SK-N-SH (cell line): ENCODE measurements at regions of chr19 and their contacts with region 1.

Region 1: DNA sequence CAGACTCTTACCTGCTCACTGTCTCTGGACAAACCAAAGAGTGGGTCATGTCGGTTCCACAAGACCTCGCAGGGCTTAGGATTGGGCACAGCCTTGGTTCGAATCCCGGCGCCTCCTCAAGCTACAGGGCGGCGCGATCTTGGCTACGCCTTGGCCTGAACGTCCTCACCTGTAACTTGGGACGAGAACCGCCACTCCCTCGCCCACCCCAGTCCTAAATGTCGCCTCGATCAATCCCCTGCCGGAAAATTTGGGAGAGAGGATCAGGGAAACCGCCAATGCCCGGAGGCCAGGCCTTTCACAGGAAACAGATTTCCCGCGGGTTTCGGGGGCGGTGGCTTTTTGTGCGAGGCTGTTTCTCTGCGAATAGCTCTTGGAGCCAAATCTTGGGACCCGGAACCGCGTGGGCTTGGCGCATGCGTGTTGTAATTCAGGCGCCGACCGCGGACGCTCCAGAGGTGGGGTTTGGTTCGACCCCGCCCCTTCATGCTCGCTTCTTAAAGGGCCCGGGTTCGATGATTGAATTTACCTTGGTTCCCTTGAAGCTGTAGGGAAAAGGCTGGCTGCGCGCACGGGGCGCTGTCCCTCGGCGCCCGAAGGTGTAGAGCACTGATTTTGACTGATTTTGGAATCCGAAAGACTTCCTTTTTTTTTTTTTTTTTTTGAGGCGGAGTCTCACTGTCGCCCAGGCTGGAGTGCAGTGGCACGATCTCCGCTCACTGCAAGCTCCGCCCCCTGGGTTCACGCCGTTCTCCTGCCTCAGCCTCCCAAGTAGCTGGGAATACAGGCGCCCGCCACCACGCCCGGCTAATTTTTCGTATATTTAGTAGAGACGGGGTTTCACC is at the start of gene NR2C2AP:
- DNase-seq: peak; percentile 98
- H3K4me3 ChIP-seq: peak within 1 kb of the TSS; percentile 65 to 79
- H3K27ac ChIP-seq: peak within 1 kb of the TSS; percentile 33 to 51; a peak in 3 of 4 replicates
- H3K4me1 ChIP-seq: peaks cover 0 to 11% of the 10 kb centered on the region in 2 experiments; a peak in 1 of 4 replicates
- H3K27me3 ChIP-seq: no peaks in the 10 kb centered on the region
- CTCF ChIP-seq: no peak
- EP300 ChIP-seq: no peak
- RAD21 ChIP-seq: no peak
- polyA plus RNA-seq, gene NR2C2AP: 21.2 and 21.9 TPM in 2 replicates

Region 2: DNA sequence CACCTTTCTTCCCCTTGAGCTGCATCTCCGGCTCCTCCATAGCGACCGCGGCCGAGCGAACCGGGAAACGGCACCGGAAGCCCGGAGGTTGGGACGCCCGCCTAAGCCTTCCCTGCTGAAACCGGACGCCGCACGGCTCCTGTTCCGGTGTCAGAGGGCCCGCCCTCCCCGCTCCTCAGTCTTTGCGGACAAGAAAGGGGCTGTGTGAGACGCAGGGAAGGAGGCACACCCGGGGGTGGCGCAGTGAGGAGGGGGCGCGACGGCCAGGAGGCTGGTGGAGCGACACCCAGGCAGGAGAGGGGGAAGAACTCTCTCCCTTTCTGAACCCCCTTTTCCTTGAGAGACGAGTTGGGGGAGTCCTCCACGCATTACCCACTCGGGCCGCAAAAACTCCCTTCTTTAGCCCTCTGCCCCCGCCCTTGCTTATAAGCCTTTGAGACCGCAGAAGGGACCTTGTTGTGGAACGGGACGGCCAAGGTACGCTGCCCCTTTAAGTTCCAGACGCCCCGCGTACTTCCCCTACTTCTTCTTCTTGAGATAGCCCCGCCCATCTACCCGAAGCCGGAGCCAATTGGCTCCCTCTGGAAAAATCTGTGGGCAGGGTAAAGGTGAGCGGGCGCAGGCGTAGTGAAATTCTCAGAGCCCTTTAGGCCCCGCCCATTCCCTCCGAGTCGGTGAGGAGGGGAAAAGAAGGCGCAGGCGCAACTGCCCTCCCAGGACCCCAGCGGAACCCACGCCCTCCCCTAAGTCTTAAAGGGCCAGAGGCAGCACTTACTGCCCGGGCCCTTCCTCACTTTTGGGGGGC is 11.0 kb before region 1 on chr19 and contains the starts of genes BORCS8 and RFXANK:
- CTCF ChIA-PET with region 1: interaction called, 6 read pairs
- POLR2A ChIA-PET with region 1: interaction called, 10 read pairs
- DNase-seq: peak; percentile 98
- H3K4me3 ChIP-seq: peak within 1 kb of the TSS; percentile 69 to 91
- H3K27ac ChIP-seq: peak within 1 kb of the TSS; percentile 94 to 97
- H3K4me1 ChIP-seq: peaks cover 11 to 14% of the 10 kb centered on the region in 2 experiments; a peak in 2 of 4 replicates
- H3K27me3 ChIP-seq: no peaks in the 10 kb centered on the region
- CTCF ChIP-seq: no peak
- EP300 ChIP-seq: no peak
- RAD21 ChIP-seq: no peak
- polyA plus RNA-seq, gene BORCS8: 33.7 and 36.4 TPM in 2 replicates
- polyA plus RNA-seq, gene RFXANK: 98.2 and 117 TPM in 2 replicates